Left cardiac atrium (tissue), 4 donors: ENCODE measurements at regions of chr22 and their contacts with region 1.

Region 1: GRCh38 chr22:23539135-23539838 is 40.8 kb downstream of the IGLL1 start:
- DNase-seq: peak; percentile 84
- ATAC-seq: peak; percentile 96 to 98

Region 2: DNA sequence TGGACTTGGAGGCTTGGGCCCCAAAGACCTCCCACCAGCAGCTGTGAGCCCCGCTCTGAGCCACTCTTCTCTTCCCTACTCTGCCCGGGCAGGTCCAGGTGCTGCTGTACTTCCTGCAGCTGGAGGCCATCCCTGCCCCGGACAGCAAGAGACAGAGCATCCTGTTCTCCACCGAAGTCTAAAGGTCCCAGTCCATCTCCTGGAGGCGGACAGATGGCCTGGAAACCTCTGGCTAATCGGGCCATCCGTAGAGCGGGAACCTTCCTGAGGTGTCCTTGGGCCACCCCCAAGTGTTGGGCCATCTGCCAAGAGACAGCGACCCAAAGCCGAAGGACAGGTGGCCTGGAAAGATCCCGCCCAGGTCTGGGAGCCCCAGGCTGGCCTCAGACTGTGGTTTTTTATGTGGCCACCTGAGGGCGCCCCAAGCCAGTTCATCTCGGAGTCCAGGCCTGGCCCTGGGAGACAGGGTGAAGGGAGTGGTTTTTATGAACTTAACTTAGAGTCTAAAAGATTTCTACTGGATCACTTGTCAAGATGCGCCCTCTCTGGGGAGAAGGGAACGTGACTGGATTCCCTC is 223.9 kb before region 1 on chr22:
- intact Hi-C with region 1: no loop called
- DNase-seq: peak; percentile 50
- ATAC-seq: no peak

Region 3: DNA sequence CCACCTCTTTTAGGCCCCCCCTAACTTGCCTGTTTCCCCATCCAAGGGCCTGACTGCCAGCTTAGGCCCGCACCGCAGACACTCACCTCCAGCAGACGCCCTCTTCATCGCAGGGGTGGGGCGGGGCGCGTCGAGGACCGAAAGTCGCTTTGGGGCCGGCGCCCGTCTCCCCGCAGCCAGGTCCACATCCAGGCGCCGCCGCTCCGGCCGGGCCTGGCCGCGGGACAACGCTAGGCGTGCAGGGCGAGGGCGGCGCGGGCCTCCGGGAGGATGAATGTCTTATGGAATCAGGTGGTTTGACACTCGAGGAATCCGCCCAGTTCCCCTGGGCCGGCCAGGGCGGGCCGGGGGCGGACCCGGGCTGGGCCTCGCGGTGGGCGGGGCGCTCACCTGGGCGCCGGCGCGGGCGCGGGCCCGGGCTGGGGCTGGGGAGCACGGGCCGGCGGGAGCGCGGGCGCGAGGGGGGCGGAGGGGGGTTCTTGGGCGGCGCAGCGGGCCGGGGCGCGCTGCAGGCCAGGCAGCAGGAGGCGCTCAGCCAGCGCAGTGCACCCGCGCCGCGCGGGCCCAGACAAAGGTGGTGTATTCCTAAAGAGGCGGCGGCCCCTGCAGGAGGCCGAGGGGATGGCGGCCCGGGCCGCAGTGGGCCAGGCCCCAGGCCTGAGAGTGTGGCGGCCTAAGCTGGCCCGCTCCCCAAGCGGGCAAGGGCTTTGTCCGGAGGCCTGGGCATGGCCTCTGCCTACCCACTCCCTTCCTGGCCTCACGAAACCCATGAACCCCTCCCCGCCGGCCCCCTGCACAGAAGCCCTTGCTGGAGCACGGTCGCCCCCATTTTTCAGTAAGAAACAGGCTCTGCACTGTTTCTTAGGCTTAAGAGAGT is 136.8 kb before region 1 on chr22:
- intact Hi-C with region 1: loop called in 1 of 2 experiments (anchors 5 kb)
- DNase-seq: peak; percentile 64
- ATAC-seq: peak; percentile 47 to 84

Region 4: GRCh38 chr22:23591201-23591791 is 52.0 kb after region 1 on chr22:
- intact Hi-C with region 1: loop called in 1 of 2 experiments (anchors 5 kb)
- DNase-seq: peak; percentile 65
- ATAC-seq: peak; percentile 41 to 74

Region 5: DNA sequence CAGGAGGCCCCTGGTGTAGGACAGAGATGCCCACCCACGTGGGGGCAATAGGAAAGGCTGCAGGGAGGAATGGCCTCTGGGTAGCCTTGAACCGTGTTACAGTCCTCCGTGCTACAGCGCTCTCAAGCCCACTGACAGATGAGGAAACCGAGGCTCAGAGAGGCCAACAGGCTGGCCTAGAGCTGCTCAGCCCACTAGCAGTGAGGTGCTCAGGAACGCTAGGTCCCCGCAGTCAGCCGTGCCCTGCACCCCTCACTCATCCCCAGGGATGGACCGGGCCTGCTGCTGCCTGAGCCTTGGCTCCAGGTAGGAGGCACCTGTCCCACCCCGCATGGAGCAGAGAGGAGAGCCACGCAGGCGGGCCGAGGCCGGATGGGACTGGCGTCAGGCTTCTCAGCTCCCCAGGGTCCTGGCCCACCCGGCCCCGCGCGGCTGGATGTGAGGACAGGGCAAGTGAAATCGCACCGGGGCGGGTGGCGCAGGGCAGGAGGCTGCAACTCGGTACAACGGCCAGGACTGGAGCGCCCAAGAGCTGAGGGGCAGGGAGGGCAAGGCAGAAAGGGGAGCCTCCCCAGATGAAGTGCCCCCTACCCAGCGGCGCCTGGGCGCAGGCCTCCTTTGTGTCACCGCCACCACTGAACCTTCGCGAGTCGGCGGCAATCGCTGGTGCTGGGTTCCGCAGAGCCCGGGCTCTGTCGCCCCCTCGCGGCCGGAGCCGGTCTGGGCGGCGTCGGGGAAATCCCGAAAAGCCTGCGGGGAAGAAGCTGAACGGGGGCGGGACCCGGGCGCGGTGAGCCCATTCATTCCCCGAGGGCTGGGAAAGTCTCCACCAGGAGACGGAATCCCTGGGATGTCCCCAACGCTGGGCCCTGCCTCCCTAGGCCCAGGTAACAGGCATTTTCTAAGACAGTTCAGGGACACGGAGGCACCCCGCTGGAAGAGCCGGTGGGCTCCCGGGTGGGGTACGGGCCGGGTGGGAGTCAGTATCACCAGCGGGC is 310.0 kb after region 1 on chr22:
- intact Hi-C with region 1: loop called (anchors 5 to 10 kb)
- DNase-seq: peak; percentile 85
- ATAC-seq: peak; percentile 64 to 70